Psoas muscle (tissue), 8 donors: ENCODE measurements at regions of chr5 and their contacts with region 1.

Region 1: DNA sequence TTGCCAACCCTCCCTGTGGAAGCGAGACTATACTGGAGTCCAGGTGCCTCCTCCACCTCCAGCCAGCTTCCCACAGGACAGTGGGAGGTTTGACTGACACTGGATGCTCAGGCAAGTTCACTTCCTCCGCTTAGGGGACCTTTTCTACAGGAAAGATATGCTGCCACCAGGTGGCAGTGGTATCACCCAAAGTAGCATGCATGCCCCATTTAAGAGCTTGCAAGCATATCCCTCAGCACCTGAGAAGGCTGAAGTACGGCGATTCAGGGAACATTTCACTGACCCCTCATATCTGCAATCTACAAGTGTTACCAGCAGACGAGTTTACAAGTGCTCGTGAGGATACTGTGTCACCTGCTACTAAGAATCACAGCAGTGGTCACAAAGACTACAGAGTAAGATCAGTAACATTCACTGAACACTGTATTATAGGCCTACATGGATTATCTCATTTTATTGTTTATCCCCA is 75.5 kb downstream of the KLHL3 start:
- DNase-seq: peak; percentile 57 to 59
- ATAC-seq: peak; percentile 75 to 92 (median 84)
- H3K4me3 ChIP-seq: no peak overlapping the region
- H3K27ac ChIP-seq: no peak overlapping the region
- H3K4me1 ChIP-seq: peaks cover 4% of the 10 kb centered on the region
- H3K27me3 ChIP-seq: no peaks in the 10 kb centered on the region
- CTCF ChIP-seq: peak; percentile 76

Region 2: GRCh38 chr5:137695651-137696428 is 35.5 kb after region 1 on chr5:
- intact Hi-C with region 1: no loop called
- DNase-seq: no peak
- ATAC-seq: no peak
- H3K4me3 ChIP-seq: no peak overlapping the region
- H3K27ac ChIP-seq: no peak overlapping the region
- H3K4me1 ChIP-seq: peaks cover 15% of the 10 kb centered on the region
- H3K27me3 ChIP-seq: no peaks in the 10 kb centered on the region
- CTCF ChIP-seq: peak; percentile 11

Region 3: GRCh38 chr5:137743031-137743640 is 82.8 kb after region 1 on chr5:
- intact Hi-C with region 1: loop called in 1 of 2 experiments (anchors 1 kb)
- DNase-seq: no peak
- ATAC-seq: peak; percentile 62 to 90 (median 84)
- H3K4me3 ChIP-seq: no peak overlapping the region
- H3K27ac ChIP-seq: no peak overlapping the region
- H3K4me1 ChIP-seq: no peaks in the 10 kb centered on the region
- H3K27me3 ChIP-seq: no peaks in the 10 kb centered on the region
- CTCF ChIP-seq: peak; percentile 70

Region 4: GRCh38 chr5:138138949-138139780 is 478.8 kb after region 1 on chr5 and contains the start of gene NME5:
- intact Hi-C with region 1: loop called in 1 of 2 experiments (anchors 10 kb)
- DNase-seq: peak; percentile 53 to 76
- ATAC-seq: peak; percentile 70 to 95 (median 86)
- H3K4me3 ChIP-seq: peak within 1 kb of the TSS; percentile 69
- H3K27ac ChIP-seq: no peak within 1 kb of the TSS
- H3K4me1 ChIP-seq: peaks cover 6% of the 10 kb centered on the region
- H3K27me3 ChIP-seq: no peaks in the 10 kb centered on the region
- CTCF ChIP-seq: no peak
- total RNA-seq, gene NME5: 0.65 to 1.2 (median 0.96) TPM